Right ventricle myocardium superior (tissue), 1 donor: ENCODE measurements at regions of chr10 and their contacts with region 1.

Region 1: GRCh38 chr10:97463363-97464132 is 17.6 kb downstream of the ZDHHC16 start:
- DNase-seq: no peak
- ATAC-seq: peak; percentile 70

Region 2: GRCh38 chr10:97388152-97388551 is 75.4 kb before region 1 on chr10:
- intact Hi-C with region 1: no loop called
- DNase-seq: peak; percentile 63
- ATAC-seq: peak; percentile 35

Region 3: GRCh38 chr10:97553575-97554031 is 90.1 kb after region 1 on chr10:
- intact Hi-C with region 1: loop called (anchors 2 kb)
- DNase-seq: peak; percentile 86
- ATAC-seq: peak; percentile 96

Region 4: DNA sequence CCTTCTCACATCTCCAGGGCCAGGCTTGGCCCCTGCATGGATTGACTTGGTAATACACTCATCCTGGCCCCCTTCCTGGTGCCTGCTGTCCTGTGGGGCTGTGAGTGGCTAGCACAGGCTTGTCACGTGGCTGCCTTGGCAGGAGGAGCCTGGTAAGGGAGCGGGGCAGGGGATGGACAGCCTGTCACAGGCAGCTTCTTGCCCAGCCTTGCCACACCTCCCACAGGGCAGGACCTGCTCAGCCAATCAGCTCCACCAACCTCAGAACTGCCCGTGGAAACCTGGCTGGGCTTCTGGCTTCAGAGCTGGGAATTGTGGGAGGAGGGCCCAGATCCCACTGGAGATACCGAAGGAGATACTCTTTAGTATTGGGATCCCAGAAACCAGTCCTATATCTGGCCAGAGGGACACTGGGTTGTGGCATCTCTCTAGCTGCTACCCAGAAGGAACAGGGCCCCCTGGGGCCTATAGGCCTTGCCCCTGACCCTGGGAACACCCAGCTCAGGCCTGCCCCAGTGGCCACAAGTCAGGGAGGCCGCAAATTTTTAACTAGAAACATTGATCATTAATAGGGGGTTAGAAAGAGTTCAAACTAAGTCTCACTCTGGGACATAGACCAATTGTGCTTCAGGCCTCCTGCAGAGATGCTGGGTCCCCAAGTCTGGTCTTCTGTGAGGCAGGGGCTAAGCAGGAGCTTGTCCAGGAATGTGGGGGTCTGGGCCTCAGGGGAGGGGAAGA is 120.7 kb after region 1 on chr10 and contains the start of gene HOGA1:
- intact Hi-C with region 1: no loop called
- DNase-seq: peak; percentile 90
- ATAC-seq: peak; percentile 91
- total RNA-seq, gene HOGA1: 18.7 TPM